ENCODE measurements at regions of chr19 and their contacts with region 1.

Region 1: GRCh38 chr19:47243776-47244547 is 12.4 kb upstream of the CCDC9 start:
- DNase-seq: peak; percentile 94
- H3K4me3 Mint-ChIP-seq: peak overlapping the region; percentile 70
- H3K27ac Mint-ChIP-seq: peak overlapping the region; percentile 87
- H3K4me1 Mint-ChIP-seq: peaks cover 30% of the 10 kb centered on the region
- H3K27me3 Mint-ChIP-seq: peaks cover 7% of the 10 kb centered on the region

Region 2: GRCh38 chr19:47013041-47013517 is 230.9 kb before region 1 on chr19:
- CTCF ChIA-PET with region 1: interaction called, 25 read pairs
- POLR2A ChIA-PET with region 1: no interaction called
- DNase-seq: peak; percentile 66
- H3K4me3 Mint-ChIP-seq: no peak overlapping the region
- H3K27ac Mint-ChIP-seq: no peak overlapping the region
- H3K4me1 Mint-ChIP-seq: peaks cover 9% of the 10 kb centered on the region
- H3K27me3 Mint-ChIP-seq: peaks cover 15% of the 10 kb centered on the region

Region 3: DNA sequence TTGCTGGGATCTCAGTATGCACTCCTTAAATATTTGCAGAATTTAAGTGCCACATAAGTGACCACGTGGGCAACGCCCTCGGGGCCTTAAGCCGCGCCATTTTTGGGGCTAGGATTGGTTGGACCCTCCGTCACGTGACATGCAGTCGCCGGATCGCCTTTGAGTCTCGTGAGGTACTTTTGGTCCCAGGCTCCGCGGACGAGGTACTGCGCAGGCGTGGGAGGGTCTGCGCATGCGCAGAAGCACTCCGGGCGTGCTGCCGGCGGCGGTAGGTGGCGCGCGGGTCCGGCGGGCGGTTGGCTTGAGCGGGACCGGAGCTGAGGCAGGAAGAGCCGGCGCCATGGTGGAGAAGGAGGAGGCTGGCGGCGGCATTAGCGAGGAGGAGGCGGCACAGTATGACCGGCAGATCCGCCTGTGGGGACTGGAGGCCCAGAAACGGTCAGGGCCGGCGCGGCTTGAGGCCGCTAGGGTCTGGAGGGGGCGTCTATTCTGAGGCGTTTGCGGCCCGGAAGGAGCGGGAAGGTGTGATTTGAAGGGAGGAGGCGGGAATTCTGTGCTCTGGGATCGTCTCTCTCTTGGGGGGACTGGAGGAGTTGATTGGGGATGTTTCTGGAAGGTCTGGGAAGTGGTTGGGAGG is 113.3 kb before region 1 on chr19 and contains the start of gene SAE1:
- CTCF ChIA-PET with region 1: interaction called, 36 read pairs
- POLR2A ChIA-PET with region 1: interaction called, 9 read pairs
- DNase-seq: peak; percentile 94
- H3K4me3 Mint-ChIP-seq: peak within 1 kb of the TSS; percentile 97
- H3K27ac Mint-ChIP-seq: peak within 1 kb of the TSS; percentile 90
- H3K4me1 Mint-ChIP-seq: peaks cover 47% of the 10 kb centered on the region
- H3K27me3 Mint-ChIP-seq: no peaks in the 10 kb centered on the region
- total RNA-seq, gene SAE1: 150 TPM

Region 4: GRCh38 chr19:47157431-47158321 is 86.3 kb before region 1 on chr19:
- CTCF ChIA-PET with region 1: interaction called, 49 read pairs
- POLR2A ChIA-PET with region 1: interaction called, 5 read pairs
- DNase-seq: peak; percentile 49
- H3K4me3 Mint-ChIP-seq: peak overlapping the region; percentile 0
- H3K27ac Mint-ChIP-seq: peak overlapping the region; percentile 85
- H3K4me1 Mint-ChIP-seq: peaks cover 51% of the 10 kb centered on the region
- H3K27me3 Mint-ChIP-seq: no peaks in the 10 kb centered on the region

Region 5: GRCh38 chr19:47210689-47211316 is 33.2 kb before region 1 on chr19:
- CTCF ChIA-PET with region 1: interaction called, 361 read pairs
- POLR2A ChIA-PET with region 1: interaction called, 89 read pairs
- DNase-seq: peak; percentile 84
- H3K4me3 Mint-ChIP-seq: no peak overlapping the region
- H3K27ac Mint-ChIP-seq: peak overlapping the region; percentile 72
- H3K4me1 Mint-ChIP-seq: peaks cover 16% of the 10 kb centered on the region
- H3K27me3 Mint-ChIP-seq: no peaks in the 10 kb centered on the region

Region 6: GRCh38 chr19:47256688-47257443 is 12.9 kb after region 1 on chr19:
- CTCF ChIA-PET with region 1: interaction called, 73 read pairs
- POLR2A ChIA-PET with region 1: interaction called, 36 read pairs
- DNase-seq: peak; percentile 100
- H3K4me3 Mint-ChIP-seq: peak overlapping the region; percentile 85
- H3K27ac Mint-ChIP-seq: peak overlapping the region; percentile 85
- H3K4me1 Mint-ChIP-seq: peaks cover 40% of the 10 kb centered on the region
- H3K27me3 Mint-ChIP-seq: no peaks in the 10 kb centered on the region

Region 7: GRCh38 chr19:47296036-47296435 is 52.1 kb after region 1 on chr19:
- CTCF ChIA-PET with region 1: no interaction called
- POLR2A ChIA-PET with region 1: no interaction called
- DNase-seq: peak; percentile 81
- H3K4me3 Mint-ChIP-seq: no peak overlapping the region
- H3K27ac Mint-ChIP-seq: no peak overlapping the region
- H3K4me1 Mint-ChIP-seq: peaks cover 13% of the 10 kb centered on the region
- H3K27me3 Mint-ChIP-seq: no peaks in the 10 kb centered on the region

Region 8: GRCh38 chr19:47306303-47306702 is 62.3 kb after region 1 on chr19:
- CTCF ChIA-PET with region 1: no interaction called
- POLR2A ChIA-PET with region 1: no interaction called
- DNase-seq: no peak
- H3K4me3 Mint-ChIP-seq: no peak overlapping the region
- H3K27ac Mint-ChIP-seq: no peak overlapping the region
- H3K4me1 Mint-ChIP-seq: peaks cover 5% of the 10 kb centered on the region
- H3K27me3 Mint-ChIP-seq: peaks cover 12% of the 10 kb centered on the region